Endothelial cell of umbilical vein (primary cell): ENCODE measurements at regions of chr9 and their contacts with region 1.

Region 1: GRCh38 chr9:2014696-2015580 is at the start of gene SMARCA2:
- DNase-seq: peak; percentile 98
- H3K4me3 ChIP-seq: peak within 1 kb of the TSS; percentile 63 to 86 (median 86)
- H3K27ac ChIP-seq: peak within 1 kb of the TSS; percentile 49
- H3K4me1 ChIP-seq: peaks cover 21% of the 10 kb centered on the region
- H3K27me3 ChIP-seq: peaks cover 2 to 6% of the 10 kb centered on the region in 2 experiments
- CTCF ChIP-seq: no peak
- POLR2A ChIP-seq: peak; percentile 49
- total RNA-seq, gene SMARCA2: 79.9 TPM in 2 replicates

Region 2: DNA sequence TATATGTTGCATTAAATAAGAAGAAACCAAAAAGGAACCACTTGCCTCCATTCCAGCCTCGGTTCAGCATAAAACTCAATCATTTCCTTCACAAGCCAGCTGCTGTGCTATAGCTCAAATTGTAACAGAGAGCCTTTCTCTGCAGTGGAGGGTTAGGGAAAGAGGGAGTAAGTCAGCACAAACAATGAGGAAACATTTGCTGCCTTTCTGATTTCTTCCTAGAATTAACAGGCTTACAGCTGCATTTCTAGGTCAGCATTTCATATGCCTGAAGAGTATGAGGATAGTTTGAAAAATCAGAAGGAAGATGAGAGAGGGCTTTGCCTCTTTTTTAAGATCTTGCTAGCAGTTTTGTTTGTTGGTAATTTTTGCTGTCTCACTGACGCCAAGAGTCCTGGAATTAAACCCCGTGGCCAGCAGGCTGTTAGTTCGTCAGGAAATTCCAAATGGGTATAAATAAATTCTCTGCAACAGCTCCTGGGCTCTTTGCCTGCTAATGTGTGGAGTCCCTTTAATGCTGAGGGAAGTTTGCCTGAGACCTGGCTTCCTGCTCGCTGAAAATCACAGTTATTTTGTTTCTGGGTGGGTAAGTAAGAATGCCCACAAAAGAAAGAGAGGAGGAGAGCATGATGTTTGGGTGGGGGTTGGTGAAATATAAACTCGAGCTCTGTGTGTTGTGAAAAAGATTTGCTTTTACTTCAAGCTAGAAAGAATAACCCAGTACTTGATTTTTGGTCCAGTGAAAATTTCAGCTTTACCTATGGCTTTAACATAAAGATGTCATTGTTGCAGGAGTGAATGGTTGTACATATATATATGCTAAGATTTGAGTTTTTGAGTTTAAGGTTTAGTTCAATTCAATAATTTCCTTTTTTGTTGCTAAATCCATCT is 1321.5 kb before region 1 on chr9:
- CTCF ChIA-PET with region 1: no interaction called
- POLR2A ChIA-PET with region 1: no interaction called
- dilution Hi-C with region 1: no loop called
- intact Hi-C with region 1: loop called (anchors 2 kb)
- DNase-seq: peak; percentile 92
- H3K4me3 ChIP-seq: peak overlapping the region in 2 of 3 experiments; percentile 18 to 67
- H3K27ac ChIP-seq: peak overlapping the region; percentile 86
- H3K4me1 ChIP-seq: peaks cover 66% of the 10 kb centered on the region
- H3K27me3 ChIP-seq: no peaks in the 10 kb centered on the region
- CTCF ChIP-seq: no peak
- POLR2A ChIP-seq: peak; percentile 72

Region 3: GRCh38 chr9:2055203-2055658 is 40.3 kb after region 1 on chr9:
- CTCF ChIA-PET with region 1: no interaction called
- POLR2A ChIA-PET with region 1: interaction called, 4 read pairs
- dilution Hi-C with region 1: no loop called
- intact Hi-C with region 1: loop called (anchors 1 kb)
- DNase-seq: peak; percentile 64
- H3K4me3 ChIP-seq: no peak overlapping the region
- H3K27ac ChIP-seq: no peak overlapping the region
- H3K4me1 ChIP-seq: peaks cover 19% of the 10 kb centered on the region
- H3K27me3 ChIP-seq: no peaks in the 10 kb centered on the region
- CTCF ChIP-seq: no peak
- POLR2A ChIP-seq: no peak

Region 4: GRCh38 chr9:2158111-2158610 is 143.2 kb after region 1 on chr9:
- CTCF ChIA-PET with region 1: no interaction called
- POLR2A ChIA-PET with region 1: no interaction called
- dilution Hi-C with region 1: no loop called
- intact Hi-C with region 1: loop called (anchors 1 kb)
- DNase-seq: peak; percentile 88
- H3K4me3 ChIP-seq: peak overlapping the region; percentile 23 to 76 (median 37)
- H3K27ac ChIP-seq: peak overlapping the region; percentile 79
- H3K4me1 ChIP-seq: peaks cover 26% of the 10 kb centered on the region
- H3K27me3 ChIP-seq: no peaks in the 10 kb centered on the region
- CTCF ChIP-seq: no peak
- POLR2A ChIP-seq: peak; percentile 44

Region 5: GRCh38 chr9:2620919-2621679 is 606.2 kb after region 1 on chr9:
- CTCF ChIA-PET with region 1: no interaction called
- POLR2A ChIA-PET with region 1: no interaction called
- dilution Hi-C with region 1: no loop called
- intact Hi-C with region 1: loop called (anchors 2 kb)
- DNase-seq: peak; percentile 58
- H3K4me3 ChIP-seq: peak overlapping the region; percentile 2 to 42 (median 42)
- H3K27ac ChIP-seq: no peak overlapping the region
- H3K4me1 ChIP-seq: peaks cover 13% of the 10 kb centered on the region
- H3K27me3 ChIP-seq: peaks cover 38 to 57% of the 10 kb centered on the region in 2 experiments
- CTCF ChIP-seq: no peak
- POLR2A ChIP-seq: no peak